Cardiac septum (tissue), 1 donor: ENCODE measurements at regions of chr4 and their contacts with region 1.

Region 1: GRCh38 chr4:48085821-48086607 is 48.0 kb downstream of the TXK start:
- DNase-seq: no peak

Region 2: GRCh38 chr4:47926639-47927258 is 159.3 kb before region 1 on chr4:
- intact Hi-C with region 1: loop called (anchors 5 kb)
- DNase-seq: no peak

Region 3: GRCh38 chr4:48002267-48002666 is 83.7 kb before region 1 on chr4:
- intact Hi-C with region 1: loop called (anchors 5 kb)
- DNase-seq: no peak

Region 4: DNA sequence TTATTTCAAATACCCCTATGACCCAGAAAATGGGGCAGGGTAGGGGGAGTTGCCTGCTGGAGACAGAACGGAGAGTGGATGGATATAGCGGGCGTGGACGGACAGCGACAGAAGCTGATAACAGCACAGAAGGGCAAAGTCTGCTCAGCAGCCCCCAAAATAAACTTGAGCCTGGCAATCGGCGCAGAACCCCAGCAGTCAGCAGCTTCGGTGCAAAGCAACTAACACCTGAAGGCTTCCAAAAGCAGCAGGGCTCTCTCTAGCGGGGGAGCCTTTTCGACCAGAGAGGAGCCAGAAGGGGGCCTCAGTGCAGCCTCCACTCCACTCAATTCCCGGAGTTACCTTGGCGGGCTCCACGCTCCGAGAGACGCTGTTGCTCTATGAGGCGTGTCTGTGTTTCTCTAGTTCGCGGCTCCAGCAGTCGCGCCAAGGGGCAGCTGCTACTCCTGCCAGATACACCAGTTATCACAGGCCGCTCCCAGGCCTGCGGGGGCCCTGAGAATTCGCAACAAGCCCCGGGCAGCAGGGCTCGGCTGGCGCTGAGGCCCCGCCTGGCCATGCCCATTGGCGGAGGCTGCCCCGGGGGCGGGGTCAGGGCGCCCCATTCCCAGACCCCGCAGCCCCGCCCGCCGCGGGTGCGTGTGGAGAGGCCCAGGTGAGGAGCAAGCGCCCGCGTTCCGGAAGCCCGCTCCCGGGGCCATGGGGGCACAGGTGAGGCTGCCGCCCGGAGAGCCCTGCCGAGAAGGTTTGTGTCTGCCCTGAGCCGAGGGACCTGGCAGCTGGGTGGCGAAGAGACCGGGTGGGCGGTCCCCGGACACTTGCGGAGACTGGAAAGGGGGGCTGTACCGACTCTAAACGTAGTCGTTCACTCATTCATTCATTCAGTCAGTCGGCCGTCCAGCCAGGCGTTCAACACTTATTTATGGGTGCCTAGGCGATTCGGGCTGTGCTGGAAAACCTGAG is 69.6 kb before region 1 on chr4 and contains the starts of genes CNGA1 and NIPAL1:
- intact Hi-C with region 1: loop called (anchors 5 kb)
- DNase-seq: peak; percentile 89
- total RNA-seq, gene CNGA1: 0.89 TPM
- total RNA-seq, gene NIPAL1: 0.43 TPM